Gastrocnemius medialis (tissue), 4 donors: ENCODE measurements at regions of chr2 and their contacts with region 1.

Region 1: GRCh38 chr2:237315170-237315828 is 98.7 kb downstream of the COL6A3 start:
- DNase-seq: peak; percentile 88 to 96
- ATAC-seq: peak; percentile 97 to 98
- H3K4me3 ChIP-seq: no peak overlapping the region
- H3K27ac ChIP-seq: peak overlapping the region; percentile 74 to 86 (median 84)
- H3K4me1 ChIP-seq: peaks cover 27% of the 10 kb centered on the region in 2 donors
- H3K27me3 ChIP-seq: no peaks in the 10 kb centered on the region
- CTCF ChIP-seq: peak; percentile 52 to 77 (median 60)
- POLR2A ChIP-seq: peak in 1 of 2 donors; percentile 8

Region 2: DNA sequence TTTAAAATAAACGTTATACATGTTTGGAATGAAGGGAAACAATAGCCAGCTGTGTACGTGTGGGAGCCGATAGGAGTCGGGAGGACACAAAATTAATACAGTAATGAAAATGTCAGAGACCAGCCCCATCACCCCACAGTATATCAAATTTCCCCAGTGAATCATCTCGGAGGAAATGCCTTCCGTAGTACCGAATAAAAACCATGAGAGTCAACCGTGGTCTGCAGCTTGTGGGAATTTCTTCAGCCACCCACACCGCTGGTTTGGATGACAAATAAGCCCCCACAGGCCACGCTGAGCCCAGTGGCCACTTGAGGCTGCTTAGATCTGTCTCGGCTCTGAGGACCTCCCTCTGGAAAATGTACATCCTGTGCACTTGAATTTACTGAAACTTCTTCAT is 35.1 kb before region 1 on chr2:
- in situ Hi-C with region 1: no loop called
- intact Hi-C with region 1: loop called (anchors 5 kb)
- DNase-seq: no peak
- ATAC-seq: peak; percentile 33 to 46
- H3K4me3 ChIP-seq: peak overlapping the region in 1 of 4 donors; percentile 19
- H3K27ac ChIP-seq: peak overlapping the region; percentile 31 to 73 (median 68)
- H3K4me1 ChIP-seq: peaks cover 25 to 31% of the 10 kb centered on the region in 2 donors
- H3K27me3 ChIP-seq: no peaks in the 10 kb centered on the region
- CTCF ChIP-seq: no peak
- POLR2A ChIP-seq: no peak

Region 3: DNA sequence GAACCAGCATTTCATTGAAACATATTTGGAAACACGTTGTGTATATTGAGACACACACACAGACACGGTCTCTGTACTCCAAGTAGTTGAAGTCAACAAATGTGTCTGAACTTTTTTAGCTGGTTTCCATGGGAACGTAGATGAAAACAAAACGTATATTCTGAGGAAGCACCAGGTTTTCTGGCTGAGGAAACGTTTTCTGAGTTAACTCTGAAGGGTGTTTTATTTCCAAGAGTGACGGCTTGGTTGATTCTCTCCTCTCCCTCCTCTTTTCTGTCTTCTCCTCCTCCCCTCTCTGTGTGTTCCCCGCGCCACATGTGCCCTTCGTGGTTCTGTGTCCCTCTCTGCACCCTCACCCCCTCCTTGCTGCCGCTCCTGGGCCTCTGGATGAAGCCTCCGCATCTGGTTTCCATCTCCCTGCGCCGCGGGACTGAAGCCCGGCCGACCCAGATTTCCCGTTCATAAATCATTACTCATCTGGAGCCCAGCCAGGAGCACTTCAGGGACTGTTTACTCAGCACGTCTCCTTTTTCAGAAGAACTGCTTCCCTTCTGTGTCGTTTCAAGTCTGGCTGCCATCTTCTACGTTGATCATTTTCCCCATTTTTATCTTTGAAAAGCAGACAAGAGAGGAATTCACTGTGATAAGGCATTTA is 24.0 kb before region 1 on chr2:
- in situ Hi-C with region 1: no loop called
- intact Hi-C with region 1: loop called (anchors 1 kb)
- DNase-seq: peak; percentile 94 to 96
- ATAC-seq: peak; percentile 90 to 93
- H3K4me3 ChIP-seq: peak overlapping the region in 2 of 4 donors; percentile 8 to 23
- H3K27ac ChIP-seq: peak overlapping the region; percentile 77 to 85 (median 80)
- H3K4me1 ChIP-seq: peaks cover 23 to 27% of the 10 kb centered on the region in 2 donors
- H3K27me3 ChIP-seq: no peaks in the 10 kb centered on the region
- CTCF ChIP-seq: no peak
- POLR2A ChIP-seq: peak in 1 of 2 donors; percentile 34

Region 4: DNA sequence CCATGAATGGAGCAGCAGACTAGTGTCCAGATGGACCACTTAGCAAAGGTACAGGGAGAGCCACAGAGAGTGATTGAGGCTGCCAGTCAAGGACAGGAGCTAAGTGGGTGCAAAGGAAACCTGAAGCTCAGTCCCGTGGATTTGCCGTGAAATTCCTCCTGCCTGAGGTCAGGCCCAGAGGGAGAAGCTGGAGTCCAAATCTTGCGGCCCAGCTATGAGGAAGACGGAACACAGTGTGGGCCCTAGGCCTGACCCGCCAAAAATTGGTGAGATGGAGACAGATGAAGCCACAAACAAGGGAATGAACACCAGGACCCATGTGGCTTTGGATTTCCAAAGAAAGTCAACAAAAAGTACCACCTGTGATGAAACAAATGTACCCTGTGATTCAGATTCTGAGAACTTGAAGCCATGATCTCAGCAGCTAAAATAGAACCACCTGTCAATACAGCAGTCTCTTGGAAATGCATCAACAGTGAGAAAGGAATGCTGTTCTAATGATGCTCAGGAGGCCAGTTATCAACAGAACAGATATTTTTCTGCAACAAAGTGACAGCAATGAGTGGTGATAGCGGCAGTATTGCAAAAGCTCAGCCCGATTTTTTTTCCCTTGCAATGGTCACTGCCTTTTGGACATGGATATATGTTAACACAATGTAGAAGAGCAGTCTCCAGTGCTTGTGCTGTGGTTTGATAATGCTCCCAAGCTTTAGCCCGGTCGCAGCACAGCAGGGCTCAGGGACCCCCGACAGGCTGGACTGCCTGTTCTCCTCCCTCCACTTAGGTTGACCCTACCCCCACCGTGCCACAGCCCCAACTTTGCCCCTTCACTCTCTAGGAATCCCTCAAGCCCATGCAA is 88.0 kb after region 1 on chr2:
- in situ Hi-C with region 1: no loop called
- intact Hi-C with region 1: loop called (anchors 1 kb)
- DNase-seq: peak; percentile 65 to 79
- ATAC-seq: peak; percentile 85
- H3K4me3 ChIP-seq: peak overlapping the region in 1 of 4 donors; percentile 1
- H3K27ac ChIP-seq: peak overlapping the region; percentile 71 to 87 (median 78)
- H3K4me1 ChIP-seq: peaks cover 5 to 19% of the 10 kb centered on the region in 2 donors
- H3K27me3 ChIP-seq: no peaks in the 10 kb centered on the region
- CTCF ChIP-seq: no peak
- POLR2A ChIP-seq: no peak

Region 5: DNA sequence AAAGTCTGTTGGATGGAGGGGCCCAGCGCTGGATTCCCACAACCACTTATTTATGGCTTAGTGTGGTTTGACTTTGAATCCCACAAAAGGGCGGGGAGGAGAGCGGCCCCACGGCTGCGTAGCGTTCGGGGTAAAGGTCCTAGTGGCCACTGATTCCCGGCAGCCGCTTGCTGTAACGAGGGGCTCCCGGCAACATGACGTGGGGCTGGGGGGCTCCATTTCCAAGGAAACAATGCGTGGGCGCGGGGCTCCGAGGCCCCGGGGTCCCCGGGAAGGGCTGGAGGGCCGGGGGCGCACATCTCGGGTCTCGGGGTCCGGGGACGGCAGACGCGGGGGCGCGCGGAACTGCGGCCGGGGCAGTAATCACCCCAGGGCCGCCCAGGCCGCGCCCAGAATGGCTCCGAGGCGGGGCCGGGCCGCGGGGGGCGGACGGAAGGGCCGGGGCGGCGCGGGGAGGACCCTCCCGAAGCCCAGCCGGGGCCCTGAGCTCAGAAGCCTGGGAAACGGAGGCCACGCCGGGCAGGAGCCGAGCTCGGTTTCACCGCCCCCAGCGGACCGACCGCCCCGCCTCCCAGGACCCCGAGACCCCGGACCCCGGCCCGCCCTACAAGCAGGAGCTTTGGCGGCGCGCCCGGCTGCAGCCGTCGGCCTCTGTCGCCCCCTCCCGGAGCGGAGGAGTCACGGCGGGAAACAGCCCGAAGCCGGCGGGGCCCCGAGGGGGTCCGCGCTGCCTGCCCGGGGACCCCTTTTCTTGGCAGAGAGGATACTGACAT is 159.8 kb after region 1 on chr2:
- in situ Hi-C with region 1: no loop called
- intact Hi-C with region 1: loop called (anchors 5 kb)
- DNase-seq: peak; percentile 56 to 69
- ATAC-seq: peak; percentile 45 to 72
- H3K4me3 ChIP-seq: peak overlapping the region; percentile 58 to 85 (median 67)
- H3K27ac ChIP-seq: peak overlapping the region; percentile 78 to 93 (median 89)
- H3K4me1 ChIP-seq: peaks cover 10 to 28% of the 10 kb centered on the region in 2 donors
- H3K27me3 ChIP-seq: peaks cover 0 to 8% (median 5%) of the 10 kb centered on the region in 3 donors
- CTCF ChIP-seq: peak; percentile 91 to 99 (median 97)
- POLR2A ChIP-seq: peak; percentile 41 to 69

Region 6: GRCh38 chr2:237923481-237924163 is 608.3 kb after region 1 on chr2:
- in situ Hi-C with region 1: no loop called
- intact Hi-C with region 1: no loop called
- DNase-seq: peak; percentile 44 to 71
- ATAC-seq: peak; percentile 83 to 94
- H3K4me3 ChIP-seq: peak overlapping the region; percentile 27 to 54 (median 42)
- H3K27ac ChIP-seq: peak overlapping the region; percentile 36 to 67 (median 62)
- H3K4me1 ChIP-seq: peaks cover 4 to 16% of the 10 kb centered on the region in 2 donors
- H3K27me3 ChIP-seq: no peaks in the 10 kb centered on the region
- CTCF ChIP-seq: peak; percentile 94 to 99 (median 99)
- POLR2A ChIP-seq: no peak